Breast epithelium (tissue), 4 donors: ENCODE measurements at regions of chr22 and their contacts with region 1.

Region 1: DNA sequence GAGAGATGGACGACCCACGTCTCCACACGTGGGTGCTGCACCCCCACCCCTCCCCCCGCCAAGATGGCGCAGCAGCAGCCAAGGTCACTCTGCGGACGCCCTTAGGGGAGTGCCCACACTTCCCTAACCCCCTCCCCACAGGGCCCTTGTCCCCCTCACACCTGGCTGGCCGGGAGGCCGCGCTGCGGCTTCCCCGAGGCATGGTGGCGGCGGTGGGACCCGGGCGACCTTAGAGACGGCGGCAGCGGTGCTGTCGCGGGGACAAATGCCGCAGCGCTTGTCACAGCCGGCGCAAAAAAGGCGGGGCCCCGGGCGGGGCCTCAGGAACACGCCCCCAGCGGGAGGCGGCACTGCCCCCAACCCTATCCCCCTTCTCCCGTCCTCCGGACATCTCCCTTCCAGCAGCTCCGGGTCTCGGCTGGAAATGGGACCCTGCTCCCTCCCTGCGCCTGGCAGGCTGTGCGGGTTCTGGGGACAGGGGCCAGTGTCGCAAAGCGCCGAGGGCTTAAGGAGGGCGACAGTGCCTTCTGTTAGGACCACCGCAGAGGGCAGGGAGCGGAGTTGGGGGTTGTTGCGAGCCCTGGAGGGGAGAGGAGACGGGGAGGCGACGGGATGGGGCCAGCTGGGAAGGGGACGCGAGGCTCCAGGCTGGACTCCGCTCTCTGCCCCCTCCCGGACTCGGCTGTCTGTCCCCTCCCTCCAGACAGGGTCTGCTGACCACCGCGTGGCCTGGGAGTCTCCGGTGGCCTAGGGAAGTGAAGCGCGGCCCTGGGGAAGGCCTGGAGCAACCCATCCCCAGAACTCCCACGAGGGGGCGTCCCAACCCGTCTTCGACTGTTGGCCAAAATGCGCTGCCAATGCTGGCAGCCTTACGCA is at the start of gene CHCHD10:
- DNase-seq: peak; percentile 71 to 76
- H3K4me3 ChIP-seq: peak within 1 kb of the TSS; percentile 67 to 80 (median 74)
- H3K27ac ChIP-seq: peak within 1 kb of the TSS; percentile 83 to 89
- H3K4me1 ChIP-seq: peaks cover 2 to 5% of the 10 kb centered on the region in 2 donors
- H3K27me3 ChIP-seq: no peaks in the 10 kb centered on the region
- CTCF ChIP-seq: peak; percentile 53 to 73 (median 71)
- POLR2A ChIP-seq: peak; percentile 20
- total RNA-seq, gene CHCHD10: 5.6 to 22.8 (median 21.4) TPM

Region 2: GRCh38 chr22:23522623-23523251 is 245.2 kb before region 1 on chr22:
- intact Hi-C with region 1: no loop called
- DNase-seq: no peak
- H3K4me3 ChIP-seq: peak overlapping the region; percentile 26 to 70 (median 50)
- H3K27ac ChIP-seq: peak overlapping the region; percentile 96 to 97
- H3K4me1 ChIP-seq: peaks cover 0 to 16% of the 10 kb centered on the region in 2 donors
- H3K27me3 ChIP-seq: no peaks in the 10 kb centered on the region
- CTCF ChIP-seq: no peak
- POLR2A ChIP-seq: no peak

Region 3: DNA sequence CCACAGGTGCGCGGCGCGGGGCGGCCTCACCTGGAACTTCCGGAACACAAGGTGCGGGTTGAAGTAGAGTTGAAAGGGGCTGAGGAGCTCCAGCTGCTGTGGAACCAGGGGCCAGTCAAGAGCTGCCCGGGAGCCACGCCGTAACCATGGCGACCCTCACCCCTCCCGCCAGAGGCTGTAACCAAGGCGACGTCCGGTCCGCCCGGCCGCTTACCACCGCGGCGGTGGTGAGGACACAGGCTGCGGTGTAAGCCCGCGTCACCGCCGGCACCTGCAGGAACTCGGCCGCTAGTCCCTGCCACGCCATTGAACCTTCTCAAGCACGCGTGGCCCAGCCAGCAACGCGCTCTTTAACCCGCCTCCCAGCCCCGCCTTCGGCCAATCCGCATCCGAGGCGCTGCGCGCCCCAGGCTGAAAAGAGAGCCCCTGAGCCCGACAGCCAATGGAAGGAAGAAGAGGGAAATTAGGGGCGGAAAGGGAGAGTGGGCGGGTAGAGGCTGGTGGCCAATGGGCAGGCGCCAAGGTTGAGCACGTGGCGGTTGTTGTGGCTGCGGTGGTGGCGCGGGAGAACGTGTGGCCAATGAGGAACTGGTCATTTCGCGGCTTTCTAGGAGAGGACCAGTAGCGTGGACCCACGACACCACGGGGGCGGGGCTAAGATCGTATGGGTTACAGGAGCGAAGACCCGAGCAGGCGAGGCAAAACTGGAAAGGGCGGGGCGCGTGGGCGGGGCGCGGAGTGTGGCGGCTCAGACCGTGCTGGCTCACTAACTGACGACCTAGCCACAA is 71.0 kb after region 1 on chr22 and contains the start of gene DERL3:
- intact Hi-C with region 1: loop called (anchors 10 kb)
- DNase-seq: peak; percentile 92 to 96
- H3K4me3 ChIP-seq: peak within 1 kb of the TSS; percentile 27 to 60 (median 43)
- H3K27ac ChIP-seq: no peak within 1 kb of the TSS
- H3K4me1 ChIP-seq: peaks cover 0 to 5% of the 10 kb centered on the region in 2 donors
- H3K27me3 ChIP-seq: no peaks in the 10 kb centered on the region
- CTCF ChIP-seq: no peak
- POLR2A ChIP-seq: no peak
- total RNA-seq, gene DERL3: 0.48 to 6.6 (median 2.8) TPM